Right ventricle myocardium inferior (tissue), 1 donor: ENCODE measurements at regions of chr2 and their contacts with region 1.

Region 1: GRCh38 chr2:234550511-234551107 is 53.7 kb upstream of the ARL4C start:
- DNase-seq: peak; percentile 72
- ATAC-seq: peak; percentile 73

Region 2: GRCh38 chr2:234257856-234258561 is 292.6 kb before region 1 on chr2:
- intact Hi-C with region 1: no loop called
- DNase-seq: no peak
- ATAC-seq: peak; percentile 31

Region 3: DNA sequence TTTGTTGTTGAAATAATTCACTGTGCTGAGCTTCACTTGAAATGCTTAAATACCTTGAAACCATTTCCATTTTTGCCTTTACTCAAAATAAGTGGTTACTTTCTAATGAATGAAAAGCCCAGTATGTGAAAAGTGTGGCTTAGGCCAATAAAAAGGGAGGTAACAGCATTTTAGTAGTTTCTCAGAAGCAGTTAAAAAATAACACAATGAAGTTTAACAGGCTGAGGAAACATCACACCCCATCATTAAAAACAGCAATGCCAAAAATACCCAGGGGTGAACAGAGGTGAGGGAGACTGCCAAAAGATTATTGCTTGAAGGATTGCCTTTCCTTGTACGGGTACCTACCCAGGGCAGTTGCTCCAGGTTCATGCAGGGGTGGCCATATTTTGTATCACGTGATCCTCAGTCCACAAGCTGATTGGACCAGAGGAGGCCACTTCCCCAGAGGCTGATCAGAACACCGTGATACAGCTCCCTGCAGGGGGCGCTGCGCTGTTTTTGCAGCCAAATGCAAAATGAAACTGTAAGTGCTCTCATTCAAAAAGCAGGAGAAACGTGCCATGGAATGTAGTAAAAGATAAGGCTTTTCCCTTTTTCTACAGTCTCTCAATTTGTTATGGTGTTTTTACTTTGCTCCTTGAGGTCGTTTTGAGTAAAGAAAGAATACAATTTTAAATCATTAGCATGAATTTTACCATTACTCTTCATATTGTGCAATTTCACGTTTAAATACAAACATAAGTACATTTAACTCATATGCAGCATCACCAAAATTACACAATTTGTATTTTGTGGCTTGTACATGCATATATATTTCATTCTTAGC is 331.0 kb after region 1 on chr2:
- intact Hi-C with region 1: loop called (anchors 10 kb)
- DNase-seq: peak; percentile 79
- ATAC-seq: peak; percentile 94

Region 4: GRCh38 chr2:235116885-235117492 is 566.4 kb after region 1 on chr2:
- intact Hi-C with region 1: loop called (anchors 1 kb)
- DNase-seq: no peak
- ATAC-seq: no peak